Ascending aorta (tissue), 2 donors: ENCODE measurements at regions of chr12 and their contacts with region 1.

Region 1: GRCh38 chr12:3073438-3074250 is 3.5 kb upstream of the TSPAN9 start:
- DNase-seq: peak in 1 of 2 donors; percentile 92
- H3K4me3 ChIP-seq: no peak overlapping the region
- H3K27ac ChIP-seq: peak overlapping the region; percentile 47 to 65
- H3K4me1 ChIP-seq: peaks cover 6 to 23% of the 10 kb centered on the region in 2 donors
- H3K27me3 ChIP-seq: no peaks in the 10 kb centered on the region
- CTCF ChIP-seq: peak; percentile 74 to 98 (median 97)

Region 2: GRCh38 chr12:3034067-3034750 is 39.4 kb before region 1 on chr12:
- intact Hi-C with region 1: no loop called
- DNase-seq: no peak
- H3K4me3 ChIP-seq: no peak overlapping the region
- H3K27ac ChIP-seq: no peak overlapping the region
- H3K4me1 ChIP-seq: no peaks in the 10 kb centered on the region
- H3K27me3 ChIP-seq: no peaks in the 10 kb centered on the region
- CTCF ChIP-seq: peak; percentile 53 to 70 (median 62)

Region 3: DNA sequence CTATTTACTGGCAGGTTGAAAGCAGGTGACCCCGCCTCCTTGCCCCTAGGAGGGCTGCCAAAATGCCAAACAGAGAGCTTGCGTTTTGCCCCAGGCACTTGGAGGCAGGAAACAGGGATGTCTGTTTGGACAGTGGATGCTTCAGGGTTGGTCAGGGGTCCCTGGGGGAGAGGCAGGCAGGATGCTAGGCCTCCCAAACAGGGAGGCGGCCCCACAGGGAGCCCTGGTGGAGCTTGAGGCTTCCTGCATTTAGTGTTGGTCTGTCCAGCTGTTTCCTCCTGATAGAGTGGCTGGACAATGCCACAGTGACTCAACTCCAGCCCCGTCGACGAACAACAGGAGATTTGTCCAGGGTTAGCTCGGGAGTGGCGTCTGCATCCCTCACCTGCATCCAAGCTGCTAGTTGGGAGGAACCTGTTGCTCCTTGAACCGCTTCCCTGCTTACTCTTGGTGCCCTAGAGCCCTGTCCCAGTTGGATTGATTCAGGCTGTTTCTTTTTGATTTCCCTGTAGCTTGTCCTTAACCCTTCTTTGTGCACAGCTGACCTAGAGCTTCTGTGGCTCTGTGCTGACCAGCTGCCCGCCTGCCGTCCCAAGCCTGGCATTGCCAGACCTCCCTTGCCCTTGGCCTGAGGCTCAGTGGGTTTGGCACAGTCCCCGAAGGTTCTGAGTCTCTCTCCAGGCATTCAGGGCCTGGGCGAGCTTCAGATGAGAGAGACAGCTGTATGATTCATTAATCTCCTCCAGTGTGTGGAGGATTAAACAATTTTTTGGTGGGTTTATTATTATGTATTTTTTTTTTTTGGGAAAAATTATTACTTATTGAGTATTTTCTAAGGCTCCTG is 49.4 kb after region 1 on chr12:
- intact Hi-C with region 1: loop called (anchors 2 kb)
- DNase-seq: peak in 1 of 2 donors; percentile 88
- H3K4me3 ChIP-seq: no peak overlapping the region
- H3K27ac ChIP-seq: peak overlapping the region; percentile 63
- H3K4me1 ChIP-seq: peaks cover 3 to 29% of the 10 kb centered on the region in 2 donors
- H3K27me3 ChIP-seq: no peaks in the 10 kb centered on the region
- CTCF ChIP-seq: no peak

Region 4: DNA sequence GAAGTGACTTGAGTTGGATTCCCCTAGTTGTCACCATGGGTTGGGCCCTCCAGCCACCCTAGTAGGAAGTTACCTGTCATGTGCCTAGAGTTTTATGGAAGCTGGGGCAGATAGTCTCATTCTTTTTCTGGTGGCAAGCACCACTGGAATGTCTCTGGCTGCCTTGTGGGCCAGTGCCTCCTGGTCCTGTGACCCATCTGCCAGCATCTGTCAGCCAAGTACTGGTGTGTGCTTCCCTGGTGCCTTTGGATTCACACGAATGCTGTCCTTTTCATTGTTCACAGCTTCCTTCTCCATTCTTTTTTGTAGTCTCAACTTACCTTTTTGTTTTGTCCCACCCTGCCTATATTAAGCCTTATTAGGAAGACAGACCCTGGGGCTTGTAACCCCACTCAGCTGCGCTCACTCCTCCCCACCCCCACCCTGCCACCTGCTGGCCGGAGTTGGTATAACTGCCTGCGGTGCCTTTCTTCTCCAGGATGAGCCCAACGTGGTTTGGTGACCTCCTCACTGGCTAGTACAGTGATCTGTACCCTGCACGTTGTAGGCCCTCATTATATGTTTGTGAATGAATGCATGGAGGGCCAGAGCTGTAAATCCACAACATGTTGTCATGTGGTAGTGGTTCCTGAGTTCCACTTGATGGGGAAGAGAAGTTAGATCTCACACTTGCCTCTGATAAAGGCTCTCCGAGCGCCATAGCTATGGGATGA is 129.2 kb after region 1 on chr12:
- intact Hi-C with region 1: loop called (anchors 2 kb)
- DNase-seq: peak in 1 of 2 donors; percentile 76
- H3K4me3 ChIP-seq: no peak overlapping the region
- H3K27ac ChIP-seq: no peak overlapping the region
- H3K4me1 ChIP-seq: peaks cover 6 to 36% of the 10 kb centered on the region in 2 donors
- H3K27me3 ChIP-seq: no peaks in the 10 kb centered on the region
- CTCF ChIP-seq: peak; percentile 79 to 94 (median 94)

Region 5: GRCh38 chr12:3252450-3252891 is 178.8 kb after region 1 on chr12:
- intact Hi-C with region 1: loop called (anchors 2 kb)
- DNase-seq: peak; percentile 76 to 95
- H3K4me3 ChIP-seq: peak overlapping the region in 1 of 2 donors; percentile 26
- H3K27ac ChIP-seq: peak overlapping the region; percentile 75 to 86
- H3K4me1 ChIP-seq: peaks cover 26 to 34% of the 10 kb centered on the region in 2 donors
- H3K27me3 ChIP-seq: no peaks in the 10 kb centered on the region
- CTCF ChIP-seq: no peak

Region 6: GRCh38 chr12:3803865-3804472 is 730.3 kb after region 1 on chr12:
- intact Hi-C with region 1: loop called (anchors 10 kb)
- DNase-seq: peak in 1 of 2 donors; percentile 78
- H3K4me3 ChIP-seq: no peak overlapping the region
- H3K27ac ChIP-seq: no peak overlapping the region
- H3K4me1 ChIP-seq: no peaks in the 10 kb centered on the region
- H3K27me3 ChIP-seq: no peaks in the 10 kb centered on the region
- CTCF ChIP-seq: peak; percentile 44 to 77 (median 53)